ENCODE measurements at regions of chr20 and their contacts with region 1.

Region 1: DNA sequence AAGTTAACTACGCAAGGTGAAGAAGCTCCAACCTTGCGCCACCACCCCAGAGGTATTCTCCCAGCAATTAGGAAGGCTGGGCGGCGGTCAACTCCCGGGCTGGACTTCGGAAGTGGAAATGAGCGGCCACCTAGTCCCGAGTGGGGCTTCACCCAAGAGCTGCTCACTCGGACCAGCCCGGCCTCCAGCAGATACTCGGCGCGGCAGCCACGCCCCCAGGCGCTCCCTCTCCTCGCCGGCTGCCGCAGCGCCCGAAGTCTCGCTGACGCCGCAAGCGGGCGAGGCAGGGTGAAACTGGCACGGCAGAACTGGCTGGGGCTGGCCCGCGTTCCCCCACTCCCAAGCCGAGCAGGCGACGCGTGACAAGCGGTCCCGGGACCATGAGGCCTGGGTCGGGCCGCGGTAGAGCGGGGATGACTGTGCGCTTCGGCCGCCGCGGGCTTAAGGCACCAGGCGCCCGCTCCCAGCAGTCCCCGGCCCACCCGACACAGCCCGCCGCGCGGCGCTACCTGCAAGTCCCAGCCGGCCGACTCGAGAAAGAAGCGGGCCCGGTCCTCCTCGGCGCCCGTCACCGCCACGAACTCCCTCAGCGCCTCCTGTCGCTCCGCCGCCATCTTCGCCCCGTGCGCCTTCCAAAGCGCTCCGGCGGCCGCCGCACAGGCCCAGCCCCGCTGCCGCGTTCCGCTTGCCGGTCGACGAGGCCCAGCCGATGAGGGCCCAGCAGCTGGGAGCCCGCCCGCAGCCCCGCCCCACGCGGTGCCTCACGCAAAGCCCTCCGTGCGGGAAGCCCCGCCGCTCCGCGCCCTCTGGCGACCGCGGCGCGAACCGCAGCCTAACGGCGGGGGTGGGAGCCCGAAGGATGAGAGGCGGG is at the start of gene NSFL1C:
- DNase-seq: peak; percentile 96
- ATAC-seq: peak; percentile 97
- H3K4me3 Mint-ChIP-seq: peak within 1 kb of the TSS; percentile 83
- H3K27ac Mint-ChIP-seq: peak within 1 kb of the TSS; percentile 79
- H3K4me1 Mint-ChIP-seq: peaks cover 46% of the 10 kb centered on the region
- H3K27me3 Mint-ChIP-seq: peaks cover 4% of the 10 kb centered on the region
- CTCF ChIP-seq: peak; percentile 100
- total RNA-seq, gene NSFL1C: 67.2 to 67.9 TPM

Region 2: GRCh38 chr20:1118336-1119127 is 347.9 kb before region 1 on chr20 and contains the start of gene PSMF1:
- CTCF ChIA-PET with region 1: no interaction called
- POLR2A ChIA-PET with region 1: no interaction called
- intact Hi-C with region 1: loop called (anchors 10 kb)
- DNase-seq: peak; percentile 95
- ATAC-seq: peak; percentile 98
- H3K4me3 Mint-ChIP-seq: peak within 1 kb of the TSS; percentile 83
- H3K27ac Mint-ChIP-seq: peak within 1 kb of the TSS; percentile 82
- H3K4me1 Mint-ChIP-seq: peaks cover 49% of the 10 kb centered on the region
- H3K27me3 Mint-ChIP-seq: no peaks in the 10 kb centered on the region
- CTCF ChIP-seq: no peak
- total RNA-seq, gene PSMF1: 150 to 154 TPM

Measured in activated CD8-positive, alpha-beta T cell treated with anti-CD3 and anti-CD28 coated beads for 36 hours (primary cell).